IMR-90 (cell line): ENCODE measurements at regions of chr10 and their contacts with region 1.

Region 1: GRCh38 chr10:36880898-36881297 is 244.5 kb upstream of the ANKRD30A start:
- DNase-seq: peak; percentile 56
- ATAC-seq: peak; percentile 90
- H3K4me3 ChIP-seq: no peak overlapping the region
- H3K27ac ChIP-seq: no peak overlapping the region
- H3K4me1 ChIP-seq: no peaks in the 10 kb centered on the region
- H3K27me3 ChIP-seq: peaks cover 2% of the 10 kb centered on the region
- CTCF ChIP-seq: peak; percentile 61
- POLR2A ChIP-seq: no peak
- RAD21 ChIP-seq: peak; percentile 64

Region 2: GRCh38 chr10:35236739-35237138 is 1644.2 kb before region 1 on chr10:
- CTCF ChIA-PET with region 1: no interaction called
- POLR2A ChIA-PET with region 1: no interaction called
- dilution Hi-C with region 1: no loop called
- in situ Hi-C with region 1: loop called (anchors 5 kb)
- intact Hi-C with region 1: loop called (anchors 5 kb)
- DNase-seq: peak; percentile 37
- ATAC-seq: peak; percentile 79
- H3K4me3 ChIP-seq: no peak overlapping the region
- H3K27ac ChIP-seq: no peak overlapping the region
- H3K4me1 ChIP-seq: no peaks in the 10 kb centered on the region
- H3K27me3 ChIP-seq: no peaks in the 10 kb centered on the region
- CTCF ChIP-seq: peak; percentile 48
- POLR2A ChIP-seq: no peak
- RAD21 ChIP-seq: peak; percentile 62

Region 3: DNA sequence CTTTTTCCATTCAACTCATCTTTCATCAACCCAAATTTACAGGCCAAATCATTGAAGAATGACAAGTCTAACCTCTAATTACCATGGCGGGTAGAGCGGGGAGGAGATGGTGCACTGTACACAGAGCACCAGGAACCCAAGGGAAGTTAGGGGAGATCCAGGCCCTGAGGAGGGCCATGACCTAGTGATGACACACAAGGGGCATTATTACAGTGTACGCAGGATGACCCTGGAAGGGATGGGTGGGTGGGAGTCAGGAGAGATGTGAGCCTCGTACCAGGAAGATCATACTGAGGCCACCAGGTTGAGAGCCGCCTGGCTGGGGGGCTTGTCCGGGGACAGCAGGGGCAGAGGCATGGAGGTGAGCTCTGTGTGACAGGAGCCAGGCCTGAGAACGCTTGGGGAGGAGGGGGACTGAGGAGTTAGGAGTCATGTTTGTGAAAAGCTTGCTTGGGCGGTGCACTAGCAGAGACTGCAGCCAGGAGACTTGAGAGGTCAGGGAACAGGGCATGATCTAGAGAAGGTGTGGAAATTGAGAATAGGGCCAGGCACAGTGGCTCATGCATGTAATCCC is 1634.0 kb before region 1 on chr10:
- CTCF ChIA-PET with region 1: no interaction called
- POLR2A ChIA-PET with region 1: no interaction called
- dilution Hi-C with region 1: no loop called
- in situ Hi-C with region 1: no loop called
- intact Hi-C with region 1: loop called (anchors 5 kb)
- DNase-seq: no peak
- ATAC-seq: no peak
- H3K4me3 ChIP-seq: no peak overlapping the region
- H3K27ac ChIP-seq: no peak overlapping the region
- H3K4me1 ChIP-seq: peaks cover 3% of the 10 kb centered on the region; the same call in 1 of the 2 replicates
- H3K27me3 ChIP-seq: no peaks in the 10 kb centered on the region
- CTCF ChIP-seq: no peak
- POLR2A ChIP-seq: no peak
- RAD21 ChIP-seq: no peak

Region 4: GRCh38 chr10:35613597-35614226 is 1267.2 kb before region 1 on chr10:
- CTCF ChIA-PET with region 1: interaction called, 3 read pairs
- POLR2A ChIA-PET with region 1: no interaction called
- dilution Hi-C with region 1: no loop called
- in situ Hi-C with region 1: no loop called
- intact Hi-C with region 1: loop called (anchors 5 kb)
- DNase-seq: peak; percentile 55
- ATAC-seq: peak; percentile 88
- H3K4me3 ChIP-seq: no peak overlapping the region
- H3K27ac ChIP-seq: no peak overlapping the region
- H3K4me1 ChIP-seq: no peaks in the 10 kb centered on the region
- H3K27me3 ChIP-seq: peaks cover 21% of the 10 kb centered on the region
- CTCF ChIP-seq: peak; percentile 68
- POLR2A ChIP-seq: no peak
- RAD21 ChIP-seq: peak; percentile 75

Region 5: GRCh38 chr10:35635576-35635975 is 1245.3 kb before region 1 on chr10:
- CTCF ChIA-PET with region 1: interaction called, 4 read pairs
- POLR2A ChIA-PET with region 1: no interaction called
- dilution Hi-C with region 1: no loop called
- in situ Hi-C with region 1: loop called (anchors 5 kb)
- intact Hi-C with region 1: loop called (anchors 2 kb)
- DNase-seq: peak; percentile 74
- ATAC-seq: peak; percentile 48; the same call in 1 of the 2 replicates
- H3K4me3 ChIP-seq: no peak overlapping the region
- H3K27ac ChIP-seq: no peak overlapping the region
- H3K4me1 ChIP-seq: peaks cover 5% of the 10 kb centered on the region; the same call in 1 of the 2 replicates
- H3K27me3 ChIP-seq: no peaks in the 10 kb centered on the region
- CTCF ChIP-seq: peak; percentile 96
- POLR2A ChIP-seq: peak; percentile 67; the same call in 1 of the 2 replicates
- RAD21 ChIP-seq: peak; percentile 96

Region 6: DNA sequence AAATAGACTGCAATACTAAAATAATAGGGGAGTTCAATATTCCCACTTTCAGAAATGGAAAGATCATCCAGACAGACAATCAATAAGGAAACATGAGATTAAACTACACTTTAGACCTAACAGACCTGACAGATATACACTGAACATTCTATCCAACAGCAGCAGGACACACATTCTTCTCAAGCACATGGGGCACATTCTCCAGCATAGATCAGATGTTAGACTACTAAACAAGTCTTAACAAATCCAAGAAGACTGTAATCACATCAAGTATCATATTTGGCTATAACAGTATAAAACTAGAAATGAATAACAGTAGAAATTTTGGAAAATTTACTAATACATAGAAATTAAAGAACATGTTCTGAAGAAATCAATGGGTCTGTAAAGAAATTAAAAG is 214.4 kb before region 1 on chr10:
- CTCF ChIA-PET with region 1: no interaction called
- POLR2A ChIA-PET with region 1: no interaction called
- dilution Hi-C with region 1: no loop called
- in situ Hi-C with region 1: no loop called
- intact Hi-C with region 1: no loop called
- DNase-seq: peak; percentile 28
- ATAC-seq: peak; percentile 75
- H3K4me3 ChIP-seq: no peak overlapping the region
- H3K27ac ChIP-seq: no peak overlapping the region
- H3K4me1 ChIP-seq: peaks cover 7% of the 10 kb centered on the region
- H3K27me3 ChIP-seq: no peaks in the 10 kb centered on the region
- CTCF ChIP-seq: no peak
- POLR2A ChIP-seq: no peak
- RAD21 ChIP-seq: no peak